ENCODE measurements at regions of chr15 and their contacts with region 1.

Region 1: DNA sequence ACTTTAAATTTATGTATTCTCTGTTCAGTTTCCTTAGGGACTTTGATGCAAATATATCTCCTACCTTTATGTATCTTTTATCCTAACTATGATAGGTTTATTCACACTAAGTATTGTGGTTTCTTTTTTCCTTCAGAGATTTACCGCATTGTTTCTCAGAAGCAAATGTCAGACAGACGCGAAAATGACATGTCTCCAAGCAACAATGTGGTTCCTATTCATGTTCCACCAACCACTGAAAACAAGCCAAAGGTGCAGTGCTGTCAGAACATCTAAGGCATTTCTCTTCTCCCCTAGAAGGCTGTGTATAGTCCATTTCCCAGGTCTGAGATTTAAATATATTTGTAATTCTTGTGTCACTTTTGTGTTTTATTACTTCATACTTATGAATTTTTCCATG is 18.3 kb downstream of the RAB11A start:
- DNase-seq: peak; percentile 64
- H3K4me3 Mint-ChIP-seq: peak overlapping the region; percentile 65
- H3K27ac Mint-ChIP-seq: peak overlapping the region; percentile 90
- H3K4me1 Mint-ChIP-seq: peaks cover 86% of the 10 kb centered on the region
- H3K27me3 Mint-ChIP-seq: no peaks in the 10 kb centered on the region

Region 2: GRCh38 chr15:65916664-65917406 is 29.3 kb after region 1 on chr15:
- intact Hi-C with region 1: loop called (anchors 1 kb)
- DNase-seq: peak; percentile 71
- H3K4me3 Mint-ChIP-seq: peak overlapping the region; percentile 37
- H3K27ac Mint-ChIP-seq: peak overlapping the region; percentile 83
- H3K4me1 Mint-ChIP-seq: peaks cover 55% of the 10 kb centered on the region
- H3K27me3 Mint-ChIP-seq: no peaks in the 10 kb centered on the region

Region 3: GRCh38 chr15:66261056-66261455 is 373.5 kb after region 1 on chr15:
- intact Hi-C with region 1: no loop called
- DNase-seq: no peak
- H3K4me3 Mint-ChIP-seq: no peak overlapping the region
- H3K27ac Mint-ChIP-seq: no peak overlapping the region
- H3K4me1 Mint-ChIP-seq: no peaks in the 10 kb centered on the region
- H3K27me3 Mint-ChIP-seq: peaks cover 28% of the 10 kb centered on the region

Measured in activated T-helper 1 cell treated with anti-CD3 and anti-CD28 coated beads, Interleukin-12 subunit alpha, Interleukin-12 subunit beta, Interleukin-2, Interleukin-4 antibody, amounts not matched to agents 30 ng/mL and 10 ng/mL and 1 ng/mL, durations not matched to agents 14 hours and 24 hours and 36 hours (primary cell).